Caki2 (cell line): ENCODE measurements at regions of chr6 and their contacts with region 1.

Region 1: GRCh38 chr6:11146117-11146826 is 34.7 kb upstream of the ERVFRD-1 start:
- DNase-seq: no peak

Region 2: GRCh38 chr6:10933126-10933525 is 213.1 kb before region 1 on chr6:
- in situ Hi-C with region 1: no loop called
- DNase-seq: no peak

Region 3: GRCh38 chr6:11496152-11497060 is 350.1 kb after region 1 on chr6:
- in situ Hi-C with region 1: loop called (anchors 5 kb)
- DNase-seq: peak; percentile 75

Region 4: DNA sequence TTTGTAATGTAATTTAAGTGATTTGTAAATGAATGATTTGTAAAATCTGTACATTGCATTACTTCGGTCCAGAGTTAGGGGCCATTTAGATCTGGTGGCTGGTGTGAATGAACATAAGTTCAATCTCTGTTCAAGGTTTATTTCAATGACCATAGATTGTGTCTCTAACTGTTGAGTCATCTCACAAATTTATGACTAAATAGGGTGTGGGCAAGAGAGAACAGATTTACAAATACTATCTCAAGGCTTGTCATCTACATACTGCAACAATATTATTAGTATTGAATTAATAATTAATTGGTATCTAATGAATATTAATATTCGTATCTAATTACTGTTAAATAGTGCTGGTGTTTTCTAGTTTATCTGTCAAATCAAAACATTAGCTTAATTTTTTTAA is 1028.6 kb after region 1 on chr6:
- in situ Hi-C with region 1: no loop called
- DNase-seq: no peak